Dorsolateral prefrontal cortex (tissue), 120 donors: ENCODE measurements at regions of chr7 and their contacts with region 1.

Region 1: GRCh38 chr7:36598054-36598674 is 126.1 kb downstream of the AOAH start:
- DNase-seq: no peak
- H3K4me3 ChIP-seq: no peak overlapping the region
- H3K27ac ChIP-seq: no peak overlapping the region
- H3K27me3 ChIP-seq: no peaks in the 10 kb centered on the region
- CTCF ChIP-seq: no peak

Region 2: GRCh38 chr7:36526863-36527548 is 71.2 kb before region 1 on chr7:
- intact Hi-C with region 1: loop called in 1 of 2 experiments (anchors 10 kb)
- DNase-seq: no peak
- H3K4me3 ChIP-seq: no peak overlapping the region
- H3K27ac ChIP-seq: no peak overlapping the region
- H3K27me3 ChIP-seq: no peaks in the 10 kb centered on the region
- CTCF ChIP-seq: no peak